ENCODE measurements at regions of chrX and their contacts with region 1.

Region 1: GRCh38 chrX:45801554-45801953 is 600.9 kb upstream of the DIPK2B start:
- DNase-seq: peak in 1 of 2 donors; percentile 65
- ATAC-seq: peak; percentile 61 to 69 (median 69)
- H3K4me3 ChIP-seq: no peak overlapping the region
- H3K4me3 Mint-ChIP-seq: no peak overlapping the region
- H3K27ac ChIP-seq: no peak overlapping the region
- H3K27ac Mint-ChIP-seq: no peak overlapping the region
- H3K4me1 ChIP-seq: peaks cover 8% of the 10 kb centered on the region
- H3K4me1 Mint-ChIP-seq: peaks cover 3 to 6% of the 10 kb centered on the region in 2 donors
- H3K27me3 ChIP-seq: no peaks in the 10 kb centered on the region
- H3K27me3 Mint-ChIP-seq: peaks cover 3 to 38% of the 10 kb centered on the region in 2 donors
- CTCF ChIP-seq: no peak

Region 2: DNA sequence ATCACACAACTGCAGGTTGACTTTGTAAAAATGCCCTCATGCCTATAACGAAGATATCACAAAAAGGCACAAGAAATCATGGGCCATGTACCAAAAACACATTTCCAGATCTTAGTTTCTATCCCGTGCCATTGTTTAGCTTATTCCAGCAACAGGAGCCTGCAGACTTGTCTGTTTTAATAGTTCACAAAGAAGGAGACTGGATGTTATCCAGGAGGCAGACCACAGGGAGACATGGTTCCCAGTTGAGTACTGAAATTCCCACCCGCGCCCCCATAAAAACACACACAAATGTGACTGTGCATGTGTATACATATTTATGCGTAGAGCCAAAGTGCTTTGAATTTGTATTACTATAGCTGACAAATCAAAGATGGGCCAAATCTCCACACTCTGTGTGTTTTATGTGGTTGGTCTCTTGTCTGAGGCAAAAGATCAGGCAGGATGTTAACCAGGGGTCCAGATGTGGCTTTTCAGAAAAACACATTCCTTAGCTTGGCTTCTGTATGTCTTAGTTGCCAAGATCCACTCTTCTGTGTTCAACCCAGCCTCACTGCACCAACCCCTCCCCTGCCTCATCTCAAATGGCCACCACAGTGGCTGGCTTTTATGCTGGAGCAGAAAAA is 131.7 kb before region 1 on chrX:
- intact Hi-C with region 1: no loop called
- DNase-seq: no peak
- ATAC-seq: no peak
- H3K4me3 ChIP-seq: no peak overlapping the region
- H3K4me3 Mint-ChIP-seq: no peak overlapping the region
- H3K27ac ChIP-seq: no peak overlapping the region
- H3K27ac Mint-ChIP-seq: no peak overlapping the region
- H3K4me1 ChIP-seq: no peaks in the 10 kb centered on the region
- H3K4me1 Mint-ChIP-seq: no peaks in the 10 kb centered on the region
- H3K27me3 ChIP-seq: no peaks in the 10 kb centered on the region
- H3K27me3 Mint-ChIP-seq: peaks cover 0 to 16% of the 10 kb centered on the region in 2 donors
- CTCF ChIP-seq: no peak

Region 3: DNA sequence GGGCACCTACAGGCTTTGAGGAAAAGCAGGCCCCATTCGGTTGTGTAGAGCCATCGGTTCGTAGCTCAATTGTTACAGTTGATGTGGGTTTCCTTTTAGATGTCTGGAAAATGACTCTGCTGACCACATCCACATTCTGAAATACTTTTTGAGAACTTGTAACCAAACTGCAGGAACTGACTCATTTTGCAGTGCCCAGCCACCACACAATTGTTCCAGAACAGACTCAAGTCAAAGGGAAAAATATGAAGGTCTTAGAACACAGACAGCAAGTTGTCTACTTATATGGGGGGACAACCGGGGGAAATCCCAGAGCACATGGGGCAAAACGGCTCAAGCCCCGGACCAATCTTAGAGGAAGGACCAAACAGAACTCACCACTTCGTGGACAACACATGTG is 43.2 kb before region 1 on chrX:
- intact Hi-C with region 1: loop called (anchors 10 kb)
- DNase-seq: peak; percentile 28 to 63
- ATAC-seq: peak; percentile 37 to 51 (median 42)
- H3K4me3 ChIP-seq: peak overlapping the region; percentile 8
- H3K4me3 Mint-ChIP-seq: peak overlapping the region; percentile 93
- H3K27ac ChIP-seq: peak overlapping the region; percentile 97
- H3K27ac Mint-ChIP-seq: peak overlapping the region in 1 of 2 donors; percentile 99
- H3K4me1 ChIP-seq: peaks cover 46% of the 10 kb centered on the region
- H3K4me1 Mint-ChIP-seq: peaks cover 45 to 58% of the 10 kb centered on the region in 2 donors
- H3K27me3 ChIP-seq: no peaks in the 10 kb centered on the region
- H3K27me3 Mint-ChIP-seq: no peaks in the 10 kb centered on the region
- CTCF ChIP-seq: no peak

Region 4: GRCh38 chrX:45843518-45843917 is 42.0 kb after region 1 on chrX:
- intact Hi-C with region 1: loop called (anchors 1 kb)
- DNase-seq: peak in 1 of 2 donors; percentile 56
- ATAC-seq: no peak
- H3K4me3 ChIP-seq: no peak overlapping the region
- H3K4me3 Mint-ChIP-seq: no peak overlapping the region
- H3K27ac ChIP-seq: no peak overlapping the region
- H3K27ac Mint-ChIP-seq: no peak overlapping the region
- H3K4me1 ChIP-seq: no peaks in the 10 kb centered on the region
- H3K4me1 Mint-ChIP-seq: no peaks in the 10 kb centered on the region
- H3K27me3 ChIP-seq: no peaks in the 10 kb centered on the region
- H3K27me3 Mint-ChIP-seq: no peaks in the 10 kb centered on the region
- CTCF ChIP-seq: peak; percentile 11

Measured in natural killer cell (primary cell).